Left ventricle myocardium superior (tissue), 1 donor: ENCODE measurements at regions of chr3 and their contacts with region 1.

Region 1: DNA sequence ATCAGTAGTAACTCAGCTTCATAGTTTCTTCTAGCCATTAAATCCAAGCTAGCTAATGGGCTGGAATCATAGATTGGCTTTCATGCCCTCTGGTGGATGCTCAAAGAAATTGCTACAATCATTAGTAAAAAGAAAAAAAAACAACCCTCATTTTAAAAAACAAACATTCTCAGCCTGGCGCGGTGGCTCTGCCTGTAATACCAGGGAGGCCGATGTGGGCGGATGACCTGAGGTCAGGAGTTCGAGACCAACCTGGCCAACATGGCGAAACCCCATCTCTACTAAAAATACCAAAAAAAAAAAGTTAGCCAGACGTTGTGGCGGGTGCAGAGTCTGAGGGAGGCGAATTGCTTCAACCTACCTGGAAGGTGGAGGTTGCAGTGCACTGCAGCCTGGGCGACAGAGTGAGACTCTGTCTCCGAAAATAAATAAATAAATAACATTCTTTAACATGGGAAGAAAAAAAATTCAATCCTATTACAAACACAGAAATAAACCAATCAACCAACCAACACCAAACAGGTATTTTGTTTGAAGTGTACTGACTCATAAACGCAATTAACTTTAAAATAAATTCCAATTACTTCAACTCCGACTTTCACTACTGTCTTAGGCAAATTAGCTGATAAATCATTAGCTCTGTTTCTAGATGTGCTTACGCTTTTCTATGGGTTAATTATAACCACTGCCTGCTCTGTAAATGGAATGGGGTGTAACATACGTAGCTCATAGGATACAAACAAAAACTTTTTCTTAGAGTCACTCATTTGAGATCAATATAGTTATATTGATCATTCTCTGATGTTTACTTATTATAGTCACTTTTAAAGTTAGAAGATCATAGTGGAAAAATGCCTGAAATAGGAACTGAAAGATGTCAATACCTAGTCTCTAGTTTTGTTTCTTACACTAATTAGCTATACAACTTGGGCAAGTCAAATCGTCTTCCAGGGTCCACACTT is 24.9 kb downstream of the TMEM207 start:
- DNase-seq: peak; percentile 62
- ATAC-seq: peak; percentile 47

Region 2: GRCh38 chr3:190224863-190225692 is 199.7 kb before region 1 on chr3:
- intact Hi-C with region 1: no loop called
- DNase-seq: no peak
- ATAC-seq: no peak

Region 3: GRCh38 chr3:190318666-190319065 is 106.1 kb before region 1 on chr3:
- intact Hi-C with region 1: no loop called
- DNase-seq: no peak
- ATAC-seq: no peak

Region 4: DNA sequence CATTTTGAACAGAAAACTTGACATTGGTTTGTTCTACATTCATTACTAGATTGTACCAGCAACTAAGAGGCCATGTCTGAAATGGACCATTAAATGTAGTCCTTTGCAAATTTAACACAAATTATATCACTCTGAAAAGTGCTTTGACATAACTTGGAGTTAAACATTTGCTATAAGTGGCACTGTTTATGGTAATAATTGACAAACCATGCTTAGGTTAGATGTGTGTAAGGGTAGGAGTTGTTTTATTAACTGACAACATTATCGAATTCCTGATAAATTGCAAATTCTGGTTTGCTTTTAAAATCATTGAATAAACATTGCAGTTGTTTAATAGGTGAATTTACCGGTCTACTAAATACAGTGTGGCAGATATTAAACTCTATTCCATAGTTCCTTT is 31.1 kb after region 1 on chr3:
- intact Hi-C with region 1: loop called (anchors 2 kb)
- DNase-seq: no peak
- ATAC-seq: no peak